HepG2 (cell line): ENCODE measurements at regions of chr1 and their contacts with region 1.

Region 1: GRCh38 chr1:201895913-201896807 is 7.5 kb downstream of the SHISA4 start:
- DNase-seq: peak; percentile 78
- ATAC-seq: peak; percentile 93
- H3K4me3 ChIP-seq: peak overlapping the region in 1 of 3 experiments; percentile 28; a peak in 1 of 6 replicates
- H3K27ac ChIP-seq: no peak overlapping the region
- H3K4me1 ChIP-seq: no peaks in the 10 kb centered on the region
- H3K27me3 ChIP-seq: no peaks in the 10 kb centered on the region
- CTCF ChIP-seq: peak; percentile 97
- EP300 ChIP-seq: no peak
- POLR2A ChIP-seq: no peak
- RAD21 ChIP-seq: peak; percentile 92

Region 2: DNA sequence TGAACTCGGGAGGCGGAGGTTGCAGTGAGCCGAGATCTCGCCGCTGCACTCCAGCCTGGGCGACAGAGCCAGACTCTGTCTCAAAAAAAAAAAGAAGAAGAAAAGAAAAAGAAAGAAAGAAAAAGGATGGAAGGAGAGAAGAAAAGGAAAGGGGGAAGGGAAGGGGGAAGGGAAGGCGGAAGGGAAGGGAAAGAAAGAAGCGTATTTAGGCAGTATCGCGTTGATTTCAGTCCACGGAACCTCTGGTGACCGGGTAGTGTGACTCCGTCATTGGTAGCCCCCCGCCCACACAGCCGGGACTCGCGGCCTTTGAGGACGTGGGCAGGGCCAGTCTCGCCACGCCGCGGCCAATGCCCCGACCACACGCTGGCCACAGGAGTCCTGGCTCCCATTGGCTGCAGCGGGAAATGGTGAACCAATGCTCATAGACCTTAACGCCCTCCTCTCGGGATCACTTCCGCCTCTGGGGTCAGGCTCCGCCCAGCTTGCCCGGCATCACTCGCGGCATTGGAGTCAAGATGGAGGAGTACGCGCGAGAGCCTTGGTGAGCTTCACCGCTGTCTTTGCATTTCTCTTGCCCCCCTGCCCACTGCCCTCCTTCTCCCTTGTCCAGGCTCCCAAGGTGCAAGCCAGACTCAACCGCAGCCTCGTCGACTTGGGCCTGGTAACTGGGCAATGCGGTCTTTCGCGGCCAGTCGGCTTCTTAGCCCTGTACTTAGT is 59.0 kb after region 1 on chr1 and contains the start of gene TIMM17A:
- CTCF ChIA-PET with region 1: no interaction called
- POLR2A ChIA-PET with region 1: interaction called, 6 read pairs
- in situ Hi-C with region 1: no loop called
- intact Hi-C with region 1: loop called (anchors 5 kb)
- DNase-seq: peak; percentile 95
- ATAC-seq: peak; percentile 100
- H3K4me3 ChIP-seq: peak within 1 kb of the TSS; percentile 71 to 95 (median 93)
- H3K27ac ChIP-seq: peak within 1 kb of the TSS; percentile 76
- H3K4me1 ChIP-seq: peaks cover 17% of the 10 kb centered on the region
- H3K27me3 ChIP-seq: peaks cover 0 to 3% of the 10 kb centered on the region in 2 experiments; a peak in 1 of 5 replicates
- CTCF ChIP-seq: no peak; the same call in 1 of the 2 replicates
- EP300 ChIP-seq: 0 out of 4 replicates have a peak, but pooled peaks of 1 of the 2 experiments have one; percentile 11
- POLR2A ChIP-seq: peak; percentile 97 to 99
- RAD21 ChIP-seq: 0 out of 2 replicates have a peak, but pooled peaks have one; percentile 16
- total RNA-seq, gene TIMM17A: 97.8 and 115 TPM in 2 replicates

Region 3: GRCh38 chr1:201970334-201971159 is 74.4 kb after region 1 on chr1:
- CTCF ChIA-PET with region 1: interaction called, 28 read pairs
- POLR2A ChIA-PET with region 1: interaction called, 3 read pairs
- in situ Hi-C with region 1: loop called (anchors 5 kb)
- intact Hi-C with region 1: no loop called
- DNase-seq: no peak
- ATAC-seq: no peak
- H3K4me3 ChIP-seq: no peak overlapping the region
- H3K27ac ChIP-seq: no peak overlapping the region
- H3K4me1 ChIP-seq: no peaks in the 10 kb centered on the region
- H3K27me3 ChIP-seq: no peaks in the 10 kb centered on the region
- CTCF ChIP-seq: no peak
- EP300 ChIP-seq: no peak
- POLR2A ChIP-seq: no peak
- RAD21 ChIP-seq: no peak

Region 4: GRCh38 chr1:202112839-202113672 is 216.9 kb after region 1 on chr1:
- CTCF ChIA-PET with region 1: no interaction called
- POLR2A ChIA-PET with region 1: no interaction called
- in situ Hi-C with region 1: no loop called
- intact Hi-C with region 1: loop called (anchors 10 kb)
- DNase-seq: no peak
- ATAC-seq: peak; percentile 58
- H3K4me3 ChIP-seq: no peak overlapping the region; a peak in 1 of 6 replicates
- H3K27ac ChIP-seq: no peak overlapping the region
- H3K4me1 ChIP-seq: peaks cover 64% of the 10 kb centered on the region
- H3K27me3 ChIP-seq: peaks cover 0 to 2% of the 10 kb centered on the region in 2 experiments; a peak in 1 of 5 replicates
- CTCF ChIP-seq: no peak
- EP300 ChIP-seq: no peak
- POLR2A ChIP-seq: no peak
- RAD21 ChIP-seq: no peak

Region 5: GRCh38 chr1:202135221-202135721 is 239.1 kb after region 1 on chr1:
- CTCF ChIA-PET with region 1: no interaction called
- POLR2A ChIA-PET with region 1: no interaction called
- in situ Hi-C with region 1: loop called (anchors 5 kb)
- intact Hi-C with region 1: no loop called
- DNase-seq: peak; percentile 52
- ATAC-seq: peak; percentile 92
- H3K4me3 ChIP-seq: no peak overlapping the region
- H3K27ac ChIP-seq: no peak overlapping the region
- H3K4me1 ChIP-seq: 0 out of 2 replicates have a peak, but pooled peaks cover 6% of the 10 kb centered on the region
- H3K27me3 ChIP-seq: no peaks in the 10 kb centered on the region
- CTCF ChIP-seq: peak; percentile 86
- EP300 ChIP-seq: no peak
- POLR2A ChIP-seq: no peak
- RAD21 ChIP-seq: peak; percentile 58